MCF 10A (cell line): ENCODE measurements at regions of chr7 and their contacts with region 1.

Region 1: DNA sequence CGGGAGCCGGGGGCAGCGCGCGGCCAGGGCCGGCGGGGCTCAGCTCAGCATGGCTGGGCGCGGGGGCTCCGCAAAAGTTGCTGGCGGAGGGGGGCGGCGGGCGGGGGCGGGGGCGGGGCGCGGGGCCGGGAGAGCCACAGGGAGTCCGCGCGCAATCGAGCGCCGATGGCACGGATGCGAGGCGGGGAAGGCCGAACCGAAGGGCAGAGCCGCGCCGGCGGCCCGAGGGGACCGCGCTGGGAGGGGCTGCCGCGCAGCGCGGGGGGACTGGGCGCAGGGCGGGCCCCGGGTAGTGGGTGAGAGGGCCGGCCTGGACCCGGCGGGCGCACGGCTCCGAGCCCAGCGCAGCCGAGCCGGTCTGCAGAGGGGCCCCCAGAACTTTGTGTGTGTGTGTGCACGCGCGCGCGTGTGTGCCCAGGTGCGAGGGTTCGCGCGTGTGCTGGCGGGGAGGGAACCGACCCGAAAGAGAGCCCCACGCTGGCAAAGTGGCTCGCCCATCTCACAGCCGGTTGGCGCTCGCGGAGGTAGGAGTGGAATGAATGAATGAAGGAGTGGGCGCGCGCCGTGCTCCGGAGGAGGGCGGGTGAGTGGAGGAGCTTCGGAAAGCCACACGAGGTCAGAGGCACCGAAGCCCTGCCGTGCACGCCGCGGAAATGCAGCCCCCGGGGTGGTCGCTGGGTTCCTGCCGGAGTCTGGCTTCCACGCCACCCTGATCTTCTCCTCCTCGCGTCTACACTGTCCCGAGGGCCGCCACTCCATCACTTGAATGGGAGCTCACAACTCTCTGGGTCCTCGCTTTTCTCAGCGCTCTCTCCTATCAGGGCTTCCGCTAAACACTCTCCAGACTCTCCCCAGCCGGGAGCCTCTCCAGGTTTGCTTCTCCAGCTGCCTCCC is at the start of gene HIPK2:
- DNase-seq: peak; percentile 68
- H3K4me3 Mint-ChIP-seq: peak within 1 kb of the TSS; percentile 96
- H3K27ac Mint-ChIP-seq: peak within 1 kb of the TSS; percentile 98
- H3K4me1 Mint-ChIP-seq: peaks cover 40% of the 10 kb centered on the region
- H3K27me3 Mint-ChIP-seq: no peaks in the 10 kb centered on the region
- CTCF ChIP-seq: no peak
- total RNA-seq, gene HIPK2: 64.3 and 93.9 TPM in 2 replicates

Region 2: DNA sequence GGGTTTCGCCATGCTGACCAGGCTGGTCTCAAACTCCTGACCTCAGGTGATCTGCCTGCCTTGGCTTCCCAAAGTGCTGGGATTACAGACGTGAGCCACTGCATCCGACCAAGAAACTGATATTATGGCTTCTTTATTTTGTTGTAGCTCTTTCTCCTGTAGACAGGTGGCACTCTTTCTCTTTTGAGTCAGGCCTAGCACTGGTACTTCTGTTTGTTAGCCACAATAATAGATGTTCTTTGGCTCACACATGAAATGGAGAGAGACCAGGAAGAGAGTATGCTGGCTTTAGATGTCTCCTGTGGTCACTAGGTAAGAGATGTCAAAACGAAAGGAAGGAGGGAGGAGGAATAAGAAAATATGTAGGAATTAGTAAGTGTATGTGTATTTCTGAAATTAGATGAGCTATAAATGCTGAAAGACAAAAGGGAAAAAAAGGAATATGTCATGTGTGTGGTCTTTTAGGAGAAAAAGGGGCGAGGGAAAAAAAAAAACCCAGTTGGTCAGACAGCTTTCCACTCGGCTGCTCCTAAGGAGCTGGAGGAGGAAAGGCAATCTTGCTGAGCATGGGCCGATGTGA is 176.0 kb before region 1 on chr7:
- CTCF ChIA-PET with region 1: no interaction called
- POLR2A ChIA-PET with region 1: no interaction called
- intact Hi-C with region 1: loop called (anchors 1 kb)
- DNase-seq: peak; percentile 36
- H3K4me3 Mint-ChIP-seq: no peak overlapping the region
- H3K27ac Mint-ChIP-seq: no peak overlapping the region
- H3K4me1 Mint-ChIP-seq: no peaks in the 10 kb centered on the region
- H3K27me3 Mint-ChIP-seq: no peaks in the 10 kb centered on the region
- CTCF ChIP-seq: peak; percentile 44

Region 3: DNA sequence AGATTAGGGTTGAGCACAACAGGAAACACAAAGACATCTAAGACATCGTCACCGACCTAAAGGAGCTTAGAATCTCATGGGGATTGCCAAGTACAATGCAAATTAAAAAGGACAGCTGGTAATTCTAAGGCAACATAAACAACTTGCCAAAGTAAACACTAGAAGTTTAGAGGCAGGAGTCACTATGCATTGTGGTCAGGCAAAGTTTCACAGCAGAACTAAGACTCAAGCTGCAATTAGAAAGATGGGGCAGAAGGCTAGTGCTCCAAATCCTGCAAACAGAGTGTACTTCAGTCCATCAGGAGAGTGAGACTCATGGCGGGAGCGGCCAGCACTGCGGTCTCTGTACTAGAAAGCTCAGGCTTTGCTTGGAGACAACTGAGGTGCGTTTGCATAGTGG is 53.1 kb before region 1 on chr7:
- CTCF ChIA-PET with region 1: interaction called, 5 read pairs
- POLR2A ChIA-PET with region 1: interaction called, 16 read pairs
- intact Hi-C with region 1: loop called (anchors 2 kb)
- DNase-seq: peak; percentile 85
- H3K4me3 Mint-ChIP-seq: peak overlapping the region; percentile 54
- H3K27ac Mint-ChIP-seq: peak overlapping the region; percentile 68
- H3K4me1 Mint-ChIP-seq: peaks cover 43% of the 10 kb centered on the region
- H3K27me3 Mint-ChIP-seq: no peaks in the 10 kb centered on the region
- CTCF ChIP-seq: no peak

Region 4: DNA sequence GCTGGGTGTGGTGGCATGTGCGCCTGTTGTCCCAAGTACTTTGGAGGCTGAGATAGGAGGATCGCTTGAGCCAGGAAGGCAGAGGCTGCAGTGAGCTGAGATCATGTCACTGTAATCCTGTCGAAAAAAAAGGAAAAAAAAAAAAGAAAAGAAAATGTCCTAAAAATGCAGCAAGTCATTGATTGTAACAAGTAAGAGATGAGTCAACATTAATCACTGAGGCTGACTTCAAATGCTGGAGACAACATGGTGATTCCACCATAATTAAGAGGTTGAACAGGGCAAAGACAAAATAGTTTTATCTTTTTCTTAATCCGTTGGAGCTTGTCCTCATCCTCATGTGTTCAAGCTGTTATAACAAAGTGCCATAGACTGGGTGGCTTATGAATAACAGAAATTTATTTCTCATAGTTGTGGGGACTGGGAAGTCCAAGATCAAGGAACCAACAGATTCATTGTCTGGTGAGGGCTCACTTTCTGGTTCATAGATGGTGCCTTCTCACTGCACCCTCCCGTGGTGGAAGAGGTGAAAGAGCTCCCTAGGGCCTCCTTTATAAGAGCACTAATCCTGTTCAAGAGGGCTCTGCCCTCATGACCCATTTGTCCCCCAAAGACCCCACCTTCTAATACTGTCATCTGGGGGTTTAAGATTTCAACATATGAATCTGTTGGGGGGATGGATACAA is 111.1 kb after region 1 on chr7:
- CTCF ChIA-PET with region 1: interaction called, 3 read pairs
- POLR2A ChIA-PET with region 1: no interaction called
- intact Hi-C with region 1: loop called (anchors 5 kb)
- DNase-seq: peak; percentile 31
- H3K4me3 Mint-ChIP-seq: no peak overlapping the region
- H3K27ac Mint-ChIP-seq: no peak overlapping the region
- H3K4me1 Mint-ChIP-seq: peaks cover 4% of the 10 kb centered on the region
- H3K27me3 Mint-ChIP-seq: no peaks in the 10 kb centered on the region
- CTCF ChIP-seq: no peak

Region 5: DNA sequence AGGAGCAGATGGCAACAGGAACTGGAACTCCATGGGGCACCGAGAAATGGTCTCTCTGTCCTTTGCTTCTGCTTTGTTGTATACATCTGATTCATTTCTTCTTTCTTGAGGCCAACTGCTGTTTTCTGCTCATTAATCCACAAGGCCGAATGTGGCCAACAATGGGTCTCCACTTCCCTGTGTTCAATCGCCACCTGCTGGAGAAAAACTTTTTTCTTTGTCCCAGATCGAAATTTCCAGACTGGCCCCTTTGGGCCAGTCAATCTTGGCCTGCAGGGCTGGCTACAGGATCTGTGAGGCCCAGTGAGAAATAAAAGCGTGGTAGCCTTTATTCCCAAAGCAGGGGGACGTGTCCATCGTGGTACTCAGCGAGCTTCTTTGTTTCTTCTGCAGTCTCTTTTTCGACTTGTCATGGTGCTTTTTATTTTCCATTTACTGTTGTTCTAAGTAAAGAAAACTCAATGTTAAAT is 225.8 kb after region 1 on chr7:
- CTCF ChIA-PET with region 1: interaction called, 24 read pairs
- POLR2A ChIA-PET with region 1: interaction called, 3 read pairs
- intact Hi-C with region 1: loop called (anchors 1 kb)
- DNase-seq: peak; percentile 80
- H3K4me3 Mint-ChIP-seq: no peak overlapping the region
- H3K27ac Mint-ChIP-seq: no peak overlapping the region
- H3K4me1 Mint-ChIP-seq: no peaks in the 10 kb centered on the region
- H3K27me3 Mint-ChIP-seq: no peaks in the 10 kb centered on the region
- CTCF ChIP-seq: peak; percentile 56